WTC11 (cell line): ENCODE measurements at regions of chr13 and their contacts with region 1.

Region 1: GRCh38 chr13:113724780-113725315 is 34.2 kb upstream of the TMEM255B start:
- DNase-seq: peak; percentile 76
- ATAC-seq: peak; percentile 96
- H3K4me3 Mint-ChIP-seq: peak overlapping the region; percentile 55
- H3K27ac Mint-ChIP-seq: no peak overlapping the region
- H3K4me1 Mint-ChIP-seq: no peaks in the 10 kb centered on the region; the same call in 1 of the 2 replicates
- H3K27me3 Mint-ChIP-seq: peaks cover 16% of the 10 kb centered on the region
- CTCF ChIP-seq: peak; percentile 75

Region 2: DNA sequence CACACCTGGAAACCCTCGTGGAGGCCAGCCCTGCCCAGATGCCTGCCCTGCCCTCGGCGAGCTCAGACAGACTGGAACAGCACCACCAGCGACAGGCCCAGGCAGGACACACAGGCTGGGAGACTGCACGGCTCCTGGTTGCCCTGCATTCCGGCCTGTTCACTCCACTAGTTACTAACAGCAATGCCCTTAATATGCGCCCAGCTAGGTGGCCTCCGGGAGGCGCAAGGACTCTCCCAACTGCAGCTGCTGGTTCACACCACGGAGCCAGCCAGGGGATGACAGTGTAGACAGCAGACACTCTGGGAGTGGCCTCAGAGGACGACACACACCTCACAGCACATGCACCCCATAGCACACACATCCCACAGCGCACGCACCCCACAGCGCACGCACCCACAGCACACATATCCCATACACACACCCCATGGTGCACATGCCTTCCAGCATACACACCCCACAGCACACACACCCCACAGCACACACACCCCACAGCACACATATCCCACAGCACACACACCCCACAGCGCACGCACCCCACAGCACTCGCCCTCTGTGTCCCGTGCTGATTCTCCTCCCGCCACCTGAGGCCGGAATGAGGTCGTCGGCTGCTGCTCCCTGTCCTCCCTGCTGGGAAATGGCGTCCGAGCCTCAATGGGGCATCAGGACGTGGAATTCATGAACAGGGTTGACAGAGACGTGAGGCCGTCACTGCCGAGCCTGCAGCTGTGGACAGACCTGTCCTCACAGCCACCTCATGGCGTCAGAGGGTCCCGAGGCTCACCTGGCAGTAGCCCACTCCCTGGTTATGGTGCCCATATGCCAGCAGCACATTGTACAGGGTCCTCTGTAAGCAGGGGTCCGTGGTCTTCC is 374.5 kb before region 1 on chr13:
- CTCF ChIA-PET with region 1: no interaction called
- POLR2A ChIA-PET with region 1: no interaction called
- DNase-seq: no peak
- ATAC-seq: peak; percentile 73
- H3K4me3 Mint-ChIP-seq: no peak overlapping the region
- H3K27ac Mint-ChIP-seq: no peak overlapping the region
- H3K4me1 Mint-ChIP-seq: no peaks in the 10 kb centered on the region
- H3K27me3 Mint-ChIP-seq: no peaks in the 10 kb centered on the region
- CTCF ChIP-seq: no peak

Region 3: DNA sequence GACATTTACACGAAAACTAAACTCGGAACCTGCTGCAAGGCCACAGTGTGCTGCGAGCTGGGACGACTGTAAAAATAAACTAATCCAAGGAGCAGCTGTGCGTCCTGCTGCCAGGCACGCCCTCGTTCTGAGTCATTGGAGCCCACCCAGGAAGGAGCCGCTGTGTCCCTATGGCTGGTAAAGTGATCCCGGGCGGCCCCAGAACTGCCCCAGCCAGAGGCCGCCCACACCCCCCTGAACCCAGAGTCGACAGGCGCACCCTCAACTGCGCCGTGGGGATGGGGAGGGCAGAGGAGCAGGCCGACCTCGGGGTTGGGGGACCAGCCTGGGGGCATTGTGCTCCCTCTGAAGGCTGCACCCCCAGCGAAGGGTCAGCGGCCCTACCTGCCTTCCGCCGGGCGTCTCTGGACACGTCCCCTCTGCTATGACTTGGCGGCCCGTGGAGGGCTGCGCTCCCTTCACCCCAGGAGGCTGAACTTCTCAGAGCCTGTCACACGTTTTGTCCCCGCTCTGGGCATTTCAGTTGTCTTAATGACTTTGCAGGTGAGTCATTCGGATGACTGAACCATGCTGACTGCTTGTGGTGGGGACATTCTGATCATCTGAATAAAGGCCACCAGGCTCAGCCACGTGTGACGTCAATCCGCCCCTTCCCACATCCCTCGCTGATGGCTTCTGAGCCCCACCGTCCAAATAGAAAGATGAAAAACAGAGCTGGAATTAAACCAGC is 314.2 kb before region 1 on chr13:
- CTCF ChIA-PET with region 1: no interaction called
- POLR2A ChIA-PET with region 1: no interaction called
- DNase-seq: no peak
- ATAC-seq: no peak
- H3K4me3 Mint-ChIP-seq: no peak overlapping the region
- H3K27ac Mint-ChIP-seq: peak overlapping the region; percentile 24; the same call in 1 of the 2 replicates
- H3K4me1 Mint-ChIP-seq: no peaks in the 10 kb centered on the region
- H3K27me3 Mint-ChIP-seq: no peaks in the 10 kb centered on the region
- CTCF ChIP-seq: no peak

Region 4: DNA sequence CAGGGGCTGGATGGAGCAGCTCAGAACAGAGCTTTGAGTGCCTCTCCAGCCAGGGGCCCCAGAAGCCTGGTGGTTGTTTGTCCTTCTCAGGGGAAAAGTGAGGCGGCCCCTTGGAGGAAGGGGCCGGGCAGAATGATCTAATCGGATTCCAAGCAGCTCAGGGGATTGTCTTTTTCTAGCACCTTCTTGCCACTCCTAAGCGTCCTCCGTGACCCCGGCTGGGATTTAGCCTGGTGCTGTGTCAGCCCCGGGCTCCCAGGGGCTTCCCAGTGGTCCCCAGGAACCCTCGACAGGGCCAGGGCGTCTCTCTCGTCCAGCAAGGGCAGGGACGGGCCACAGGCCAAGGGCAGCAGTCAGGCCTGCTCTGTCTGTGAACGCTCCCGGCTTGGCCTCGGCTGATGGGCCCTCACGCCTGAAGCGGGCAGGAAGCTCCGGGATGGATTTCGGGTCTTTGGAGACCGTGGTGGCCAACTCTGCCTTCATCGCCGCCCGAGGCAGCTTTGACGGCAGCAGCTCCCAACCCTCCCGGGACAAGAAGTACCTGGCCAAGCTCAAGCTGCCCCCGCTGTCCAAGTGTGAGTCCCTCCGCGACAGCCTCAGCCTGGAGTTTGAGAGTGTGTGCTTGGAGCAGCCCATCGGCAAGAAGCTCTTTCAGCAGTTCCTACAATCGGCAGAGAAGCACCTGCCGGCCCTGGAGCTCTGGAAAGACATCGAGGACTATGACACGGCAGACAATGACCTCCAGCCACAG is 57.7 kb before region 1 on chr13 and contains the start of gene GRK1:
- CTCF ChIA-PET with region 1: interaction called, 15 read pairs
- POLR2A ChIA-PET with region 1: interaction called, 3 read pairs
- DNase-seq: peak; percentile 19
- ATAC-seq: peak; percentile 18; the same call in 1 of the 2 replicates
- H3K4me3 Mint-ChIP-seq: no peak within 1 kb of the TSS
- H3K27ac Mint-ChIP-seq: no peak within 1 kb of the TSS; the same call in 1 of the 2 replicates
- H3K4me1 Mint-ChIP-seq: no peaks in the 10 kb centered on the region
- H3K27me3 Mint-ChIP-seq: no peaks in the 10 kb centered on the region
- CTCF ChIP-seq: no peak
- total RNA-seq, gene GRK1: 0.11 to 0.21 TPM (median 0.17 TPM) in 3 replicates

Region 5: GRCh38 chr13:113802145-113802531 is 77.3 kb after region 1 on chr13:
- CTCF ChIA-PET with region 1: interaction called, 11 read pairs
- POLR2A ChIA-PET with region 1: no interaction called
- DNase-seq: peak; percentile 76
- ATAC-seq: peak; percentile 83
- H3K4me3 Mint-ChIP-seq: 0 out of 2 replicates have a peak overlapping the region, but pooled peaks have one; percentile 14
- H3K27ac Mint-ChIP-seq: no peak overlapping the region
- H3K4me1 Mint-ChIP-seq: no peaks in the 10 kb centered on the region
- H3K27me3 Mint-ChIP-seq: no peaks in the 10 kb centered on the region
- CTCF ChIP-seq: no peak

Region 6: GRCh38 chr13:113812178-113813040 is 87.6 kb after region 1 on chr13:
- CTCF ChIA-PET with region 1: no interaction called
- POLR2A ChIA-PET with region 1: no interaction called
- DNase-seq: no peak
- ATAC-seq: no peak
- H3K4me3 Mint-ChIP-seq: no peak overlapping the region
- H3K27ac Mint-ChIP-seq: no peak overlapping the region
- H3K4me1 Mint-ChIP-seq: peaks cover 4% of the 10 kb centered on the region
- H3K27me3 Mint-ChIP-seq: no peaks in the 10 kb centered on the region; the same call in 1 of the 2 replicates
- CTCF ChIP-seq: no peak